B cell (primary cell): ENCODE measurements at regions of chr3 and their contacts with region 1.

Region 1: GRCh38 chr3:194592798-194593752 is 40.1 kb downstream of the TMEM44 start:
- DNase-seq: peak; percentile 58
- ATAC-seq: peak; percentile 58
- H3K4me3 ChIP-seq: no peak overlapping the region
- H3K4me3 Mint-ChIP-seq: no peak overlapping the region
- H3K27ac ChIP-seq: no peak overlapping the region
- H3K27ac Mint-ChIP-seq: peak overlapping the region; percentile 41
- H3K4me1 ChIP-seq: peaks cover 3 to 15% of the 10 kb centered on the region in 2 donors
- H3K4me1 Mint-ChIP-seq: peaks cover 15% of the 10 kb centered on the region
- H3K27me3 ChIP-seq: no peaks in the 10 kb centered on the region
- H3K27me3 Mint-ChIP-seq: no peaks in the 10 kb centered on the region
- CTCF ChIP-seq: no peak

Region 2: DNA sequence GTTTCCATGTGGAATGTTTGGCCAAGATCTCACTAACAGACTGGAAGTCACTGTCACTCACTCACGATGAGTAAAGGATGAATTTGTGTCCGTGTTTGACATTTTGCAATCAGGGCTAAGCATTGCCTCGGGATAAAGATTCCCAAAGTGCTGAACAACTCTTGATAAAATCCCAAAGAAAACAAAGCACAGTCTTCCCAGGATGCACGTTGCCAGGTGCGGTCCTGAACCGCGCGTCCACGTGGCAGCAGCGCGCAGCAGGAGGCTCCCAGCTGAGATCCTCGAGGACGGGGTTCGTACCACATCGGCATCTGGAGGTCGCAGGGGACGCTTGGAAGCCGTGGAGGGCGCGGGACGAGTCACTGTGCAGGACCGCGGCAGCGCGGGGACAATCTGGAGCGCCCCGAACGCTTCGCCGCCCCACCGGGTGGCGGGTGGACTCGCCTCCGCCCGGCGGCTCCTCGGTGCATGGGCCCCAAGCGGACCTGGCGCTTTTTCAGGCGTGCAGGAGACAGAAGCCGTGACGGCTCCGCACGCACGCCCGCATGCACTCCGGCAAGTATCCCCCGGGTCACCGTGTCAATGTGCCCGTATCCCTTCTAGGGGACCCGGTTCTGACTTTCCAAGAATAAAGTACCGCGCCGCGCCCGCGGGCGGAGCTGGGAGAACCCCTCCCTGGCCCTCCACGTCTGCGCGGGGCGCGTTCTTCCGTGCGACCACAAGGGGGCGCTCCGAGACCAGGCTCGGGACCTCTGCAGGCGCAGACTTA is 259.7 kb before region 1 on chr3:
- CTCF ChIA-PET with region 1: interaction called, 3 read pairs
- POLR2A ChIA-PET with region 1: no interaction called
- intact Hi-C with region 1: loop called (anchors 1 kb)
- DNase-seq: peak; percentile 91
- ATAC-seq: peak; percentile 96
- H3K4me3 ChIP-seq: peak overlapping the region in 4 of 5 experiments; percentile 15 to 62 (median 31)
- H3K4me3 Mint-ChIP-seq: peak overlapping the region; percentile 79
- H3K27ac ChIP-seq: no peak overlapping the region
- H3K27ac Mint-ChIP-seq: no peak overlapping the region
- H3K4me1 ChIP-seq: peaks cover 9 to 10% of the 10 kb centered on the region in 2 donors
- H3K4me1 Mint-ChIP-seq: peaks cover 7% of the 10 kb centered on the region
- H3K27me3 ChIP-seq: peaks cover 0 to 28% (median 7%) of the 10 kb centered on the region in 4 experiments
- H3K27me3 Mint-ChIP-seq: peaks cover 45% of the 10 kb centered on the region
- CTCF ChIP-seq: peak; percentile 99

Region 3: DNA sequence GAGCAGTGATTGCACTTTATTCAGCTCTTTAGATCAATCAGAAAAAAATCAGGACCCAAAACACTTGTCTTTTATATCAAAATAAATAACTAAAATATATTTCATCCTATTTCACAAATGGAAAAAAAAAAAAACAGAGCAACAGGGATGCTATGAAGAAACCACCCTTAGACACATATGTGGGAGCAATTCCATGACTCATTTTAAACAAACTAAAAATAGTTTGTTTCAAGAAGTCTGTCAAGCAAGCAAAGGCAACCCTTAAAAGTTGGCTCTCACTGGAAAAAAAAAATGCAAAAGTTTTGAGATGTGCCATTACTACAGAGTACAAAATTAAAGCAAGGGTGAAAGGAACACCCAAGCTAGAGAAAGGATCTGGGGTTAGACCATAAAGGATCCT is 112.0 kb before region 1 on chr3:
- CTCF ChIA-PET with region 1: interaction called, 193 read pairs
- POLR2A ChIA-PET with region 1: interaction called, 4 read pairs
- intact Hi-C with region 1: no loop called
- DNase-seq: no peak
- ATAC-seq: no peak
- H3K4me3 ChIP-seq: no peak overlapping the region
- H3K4me3 Mint-ChIP-seq: no peak overlapping the region
- H3K27ac ChIP-seq: no peak overlapping the region
- H3K27ac Mint-ChIP-seq: no peak overlapping the region
- H3K4me1 ChIP-seq: peaks cover 11 to 12% of the 10 kb centered on the region in 2 donors
- H3K4me1 Mint-ChIP-seq: peaks cover 21% of the 10 kb centered on the region
- H3K27me3 ChIP-seq: no peaks in the 10 kb centered on the region
- H3K27me3 Mint-ChIP-seq: no peaks in the 10 kb centered on the region
- CTCF ChIP-seq: no peak

Region 4: DNA sequence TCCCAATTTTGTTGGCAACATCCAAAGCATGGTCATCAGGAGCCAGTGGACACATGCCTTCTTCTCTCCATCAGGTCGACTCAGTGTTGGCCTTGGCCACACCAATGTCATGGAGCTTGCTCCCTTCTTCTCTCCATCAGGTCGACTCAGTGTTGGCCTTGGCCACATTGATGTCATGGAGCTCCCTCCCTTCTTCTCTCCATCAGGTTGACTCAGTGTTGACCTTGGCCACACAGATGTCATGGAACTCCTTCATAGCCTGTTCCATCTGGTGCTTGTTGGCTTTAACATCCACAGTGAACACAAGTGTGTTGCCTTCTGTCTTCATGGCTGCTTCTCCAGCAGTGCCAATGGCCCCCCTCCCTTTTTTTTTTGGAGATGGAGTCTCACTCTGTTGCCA is 30.1 kb before region 1 on chr3:
- CTCF ChIA-PET with region 1: no interaction called
- POLR2A ChIA-PET with region 1: no interaction called
- intact Hi-C with region 1: no loop called
- DNase-seq: no peak
- ATAC-seq: no peak
- H3K4me3 ChIP-seq: no peak overlapping the region
- H3K4me3 Mint-ChIP-seq: no peak overlapping the region
- H3K27ac ChIP-seq: no peak overlapping the region
- H3K27ac Mint-ChIP-seq: no peak overlapping the region
- H3K4me1 ChIP-seq: no peaks in the 10 kb centered on the region
- H3K4me1 Mint-ChIP-seq: no peaks in the 10 kb centered on the region
- H3K27me3 ChIP-seq: peaks cover 0 to 10% (median 0%) of the 10 kb centered on the region in 4 experiments
- H3K27me3 Mint-ChIP-seq: peaks cover 27% of the 10 kb centered on the region
- CTCF ChIP-seq: no peak